Activated CD4-positive, alpha-beta memory T cell treated with anti-CD3 and anti-CD28 coated beads for 36 hours (primary cell): ENCODE measurements at regions of chr7 and their contacts with region 1.

Region 1: DNA sequence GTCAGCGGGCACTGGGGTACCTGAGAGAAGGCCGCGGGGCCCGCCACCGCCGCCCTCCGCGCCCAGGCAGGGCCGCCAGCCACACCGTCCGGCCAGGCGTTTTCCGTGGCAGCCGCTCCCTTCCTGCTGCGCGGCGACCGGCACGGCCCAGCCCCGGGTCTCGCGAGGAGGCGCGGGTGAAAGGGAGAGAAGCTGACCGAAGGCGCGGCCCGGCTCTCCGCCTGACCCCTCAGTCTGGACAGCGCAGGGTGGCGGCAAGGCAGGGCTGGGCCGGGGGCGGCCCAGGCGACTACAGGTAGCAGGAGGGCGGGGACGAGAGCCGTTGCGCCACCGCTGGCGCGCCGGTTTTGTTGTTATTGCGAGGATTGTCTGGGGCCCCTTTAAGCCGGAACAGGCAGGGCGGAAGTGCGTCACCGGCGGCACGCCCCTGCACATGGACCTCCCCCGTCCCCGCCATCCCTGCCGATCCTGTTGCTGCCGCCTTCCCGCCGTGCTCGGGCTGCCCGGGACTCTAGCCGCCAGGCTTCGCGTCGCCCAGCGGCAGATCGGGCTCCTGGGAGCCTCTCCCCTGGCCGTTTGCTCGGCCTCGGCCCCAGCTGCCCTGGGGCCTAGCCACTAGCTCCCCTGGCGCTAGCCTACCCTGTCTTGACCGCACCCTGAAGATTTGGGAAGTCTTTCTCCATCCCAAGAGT is at the start of gene HERPUD2:
- DNase-seq: peak; percentile 95
- H3K4me3 Mint-ChIP-seq: peak within 1 kb of the TSS; percentile 93
- H3K27ac Mint-ChIP-seq: peak within 1 kb of the TSS; percentile 98
- H3K4me1 Mint-ChIP-seq: peaks cover 45% of the 10 kb centered on the region
- H3K27me3 Mint-ChIP-seq: no peaks in the 10 kb centered on the region
- total RNA-seq, gene HERPUD2: 26.2 to 29.6 TPM

Region 2: GRCh38 chr7:34991938-34992840 is 702.7 kb before region 1 on chr7:
- CTCF ChIA-PET with region 1: no interaction called
- POLR2A ChIA-PET with region 1: no interaction called
- intact Hi-C with region 1: loop called (anchors 5 kb)
- DNase-seq: peak; percentile 81
- H3K4me3 Mint-ChIP-seq: peak overlapping the region; percentile 23
- H3K27ac Mint-ChIP-seq: peak overlapping the region; percentile 83
- H3K4me1 Mint-ChIP-seq: peaks cover 29% of the 10 kb centered on the region
- H3K27me3 Mint-ChIP-seq: no peaks in the 10 kb centered on the region

Region 3: DNA sequence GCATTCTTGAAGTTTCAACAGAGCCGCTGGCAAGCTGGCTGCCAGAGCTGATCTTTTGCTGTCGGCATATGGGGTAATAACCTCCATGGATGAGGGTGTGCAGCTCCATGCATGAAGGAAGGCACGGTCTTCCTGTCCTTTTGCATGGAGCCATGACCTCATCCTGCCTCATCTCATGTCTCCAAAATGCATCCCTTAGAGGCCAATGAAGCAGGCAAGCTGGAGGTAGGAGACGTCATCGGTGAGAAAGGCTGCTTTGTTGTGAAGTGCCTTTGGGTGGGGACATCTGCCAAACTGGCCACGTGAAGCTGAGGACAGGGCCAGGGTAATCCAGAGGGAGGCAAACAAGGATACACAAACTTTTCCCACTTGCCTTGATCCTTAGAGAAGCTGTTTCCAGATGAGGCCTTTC is 279.5 kb before region 1 on chr7:
- CTCF ChIA-PET with region 1: no interaction called
- POLR2A ChIA-PET with region 1: no interaction called
- intact Hi-C with region 1: no loop called
- DNase-seq: no peak
- H3K4me3 Mint-ChIP-seq: no peak overlapping the region
- H3K27ac Mint-ChIP-seq: no peak overlapping the region
- H3K4me1 Mint-ChIP-seq: no peaks in the 10 kb centered on the region
- H3K27me3 Mint-ChIP-seq: peaks cover 10% of the 10 kb centered on the region

Region 4: DNA sequence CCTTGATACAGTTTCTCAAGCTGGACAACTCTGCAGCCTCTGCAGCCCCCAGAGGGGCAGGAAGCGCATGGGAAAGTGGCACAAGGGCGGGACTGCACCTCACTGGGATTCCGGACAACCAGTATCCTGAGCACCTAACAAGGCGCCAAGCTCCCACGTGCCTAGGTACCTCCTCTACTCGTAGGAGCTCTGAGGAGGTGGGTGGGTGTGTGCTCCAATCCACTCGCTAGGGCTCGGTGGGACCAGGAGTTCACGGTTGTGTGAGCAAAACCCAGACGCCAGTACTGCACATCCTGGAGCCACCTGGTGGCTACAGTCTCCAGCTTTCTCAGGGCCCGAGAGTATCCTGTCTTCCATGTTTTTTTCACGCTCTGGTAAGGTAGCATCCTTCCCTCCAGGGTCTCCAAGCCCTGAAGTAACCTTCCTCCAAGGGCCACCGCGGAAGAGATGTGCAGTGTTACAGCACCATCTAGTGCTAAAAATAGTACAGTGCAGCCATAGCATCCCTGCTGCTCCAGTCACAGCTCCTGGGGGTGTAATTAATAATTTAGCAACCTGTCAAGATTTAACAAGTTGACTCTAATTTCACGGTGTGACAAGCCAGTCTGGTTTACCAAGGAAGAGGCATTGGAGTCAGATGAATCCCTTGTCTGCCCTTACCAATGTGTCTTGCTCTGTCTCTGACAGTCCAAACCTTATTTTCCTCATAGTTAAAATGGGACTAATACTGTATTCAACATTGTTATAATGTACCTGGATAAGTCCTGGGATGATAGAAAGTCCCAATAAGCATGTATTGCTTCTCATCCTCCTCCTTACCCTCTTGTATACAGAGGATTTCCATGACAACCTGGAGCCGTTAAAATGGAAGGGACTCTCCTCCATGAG is 70.4 kb before region 1 on chr7:
- CTCF ChIA-PET with region 1: no interaction called
- POLR2A ChIA-PET with region 1: no interaction called
- intact Hi-C with region 1: no loop called
- DNase-seq: peak; percentile 48
- H3K4me3 Mint-ChIP-seq: no peak overlapping the region
- H3K27ac Mint-ChIP-seq: no peak overlapping the region
- H3K4me1 Mint-ChIP-seq: peaks cover 2% of the 10 kb centered on the region
- H3K27me3 Mint-ChIP-seq: no peaks in the 10 kb centered on the region

Region 5: DNA sequence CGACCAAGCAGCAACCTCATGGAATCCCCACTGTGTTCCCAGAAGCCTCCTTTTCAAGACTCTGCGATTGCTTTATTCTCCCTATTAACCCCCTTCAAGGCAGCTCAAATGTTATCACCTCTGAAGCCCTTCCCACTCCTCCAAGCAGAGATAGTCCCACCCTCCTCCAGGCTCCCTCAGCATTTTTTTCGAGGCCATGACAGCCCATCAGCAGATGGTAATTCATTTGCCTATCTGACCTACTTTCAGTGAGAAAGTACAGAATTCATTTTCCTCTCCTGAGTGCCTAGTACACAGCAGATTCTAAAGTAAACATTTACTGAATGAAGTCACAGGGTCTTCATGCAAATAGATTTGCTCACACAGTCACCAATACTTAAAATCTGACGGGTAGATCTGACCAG is 47.8 kb before region 1 on chr7:
- CTCF ChIA-PET with region 1: no interaction called
- POLR2A ChIA-PET with region 1: interaction called, 3 read pairs
- intact Hi-C with region 1: loop called (anchors 1 kb)
- DNase-seq: no peak
- H3K4me3 Mint-ChIP-seq: no peak overlapping the region
- H3K27ac Mint-ChIP-seq: peak overlapping the region; percentile 10
- H3K4me1 Mint-ChIP-seq: peaks cover 58% of the 10 kb centered on the region
- H3K27me3 Mint-ChIP-seq: no peaks in the 10 kb centered on the region

Region 6: GRCh38 chr7:35681231-35682029 is 13.5 kb before region 1 on chr7:
- CTCF ChIA-PET with region 1: no interaction called
- POLR2A ChIA-PET with region 1: interaction called, 3 read pairs
- intact Hi-C with region 1: loop called (anchors 1 kb)
- DNase-seq: no peak
- H3K4me3 Mint-ChIP-seq: peak overlapping the region; percentile 16
- H3K27ac Mint-ChIP-seq: peak overlapping the region; percentile 70
- H3K4me1 Mint-ChIP-seq: peaks cover 69% of the 10 kb centered on the region
- H3K27me3 Mint-ChIP-seq: no peaks in the 10 kb centered on the region

Region 7: DNA sequence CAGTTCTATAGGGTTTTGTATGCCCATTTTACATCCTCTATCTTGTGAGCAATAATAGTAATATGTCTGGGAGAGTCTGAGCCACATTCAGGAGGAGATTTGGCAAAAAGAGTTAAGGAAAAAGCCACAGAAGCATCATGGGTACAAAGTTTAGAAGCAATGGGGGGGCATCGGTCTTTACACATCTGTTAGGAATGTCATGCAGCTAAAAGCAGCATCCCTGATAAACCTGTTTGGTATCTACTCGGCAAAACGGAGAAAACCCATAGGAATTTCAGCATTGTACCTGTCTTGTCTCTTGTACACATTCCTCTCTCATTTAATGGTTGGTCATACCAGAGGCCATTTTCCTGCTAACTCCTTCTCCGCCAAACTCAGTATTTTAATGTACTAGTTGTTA is 12.5 kb after region 1 on chr7:
- CTCF ChIA-PET with region 1: interaction called, 13 read pairs
- POLR2A ChIA-PET with region 1: interaction called, 3 read pairs
- intact Hi-C with region 1: loop called (anchors 1 kb)
- DNase-seq: no peak
- H3K4me3 Mint-ChIP-seq: no peak overlapping the region
- H3K27ac Mint-ChIP-seq: no peak overlapping the region
- H3K4me1 Mint-ChIP-seq: peaks cover 8% of the 10 kb centered on the region
- H3K27me3 Mint-ChIP-seq: no peaks in the 10 kb centered on the region

Region 8: DNA sequence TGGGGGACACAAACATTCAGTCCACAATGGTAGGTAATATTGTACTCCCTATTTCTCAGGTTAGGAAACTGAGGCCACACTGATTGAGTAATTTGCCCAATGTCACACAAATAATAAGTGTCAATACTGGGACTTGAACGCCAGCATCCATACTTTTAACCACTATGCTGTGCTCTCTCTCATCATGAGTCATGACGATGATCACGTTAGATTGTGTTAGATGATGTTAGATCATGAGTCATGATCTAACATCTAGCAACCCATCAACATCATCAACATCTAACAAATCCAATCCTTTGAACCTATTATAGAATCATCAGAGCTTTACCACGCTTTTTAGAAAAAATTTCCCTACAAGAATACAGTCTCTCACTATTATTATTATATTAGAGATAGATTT is 28.1 kb after region 1 on chr7:
- CTCF ChIA-PET with region 1: interaction called, 7 read pairs
- POLR2A ChIA-PET with region 1: interaction called, 12 read pairs
- intact Hi-C with region 1: loop called (anchors 1 kb)
- DNase-seq: no peak
- H3K4me3 Mint-ChIP-seq: peak overlapping the region; percentile 29
- H3K27ac Mint-ChIP-seq: peak overlapping the region; percentile 91
- H3K4me1 Mint-ChIP-seq: peaks cover 62% of the 10 kb centered on the region
- H3K27me3 Mint-ChIP-seq: no peaks in the 10 kb centered on the region

Region 9: GRCh38 chr7:35729061-35729783 is 34.3 kb after region 1 on chr7:
- CTCF ChIA-PET with region 1: interaction called, 7 read pairs
- POLR2A ChIA-PET with region 1: interaction called, 12 read pairs
- intact Hi-C with region 1: no loop called
- DNase-seq: peak; percentile 68
- H3K4me3 Mint-ChIP-seq: no peak overlapping the region
- H3K27ac Mint-ChIP-seq: peak overlapping the region; percentile 15
- H3K4me1 Mint-ChIP-seq: peaks cover 61% of the 10 kb centered on the region
- H3K27me3 Mint-ChIP-seq: peaks cover 3% of the 10 kb centered on the region

Region 10: DNA sequence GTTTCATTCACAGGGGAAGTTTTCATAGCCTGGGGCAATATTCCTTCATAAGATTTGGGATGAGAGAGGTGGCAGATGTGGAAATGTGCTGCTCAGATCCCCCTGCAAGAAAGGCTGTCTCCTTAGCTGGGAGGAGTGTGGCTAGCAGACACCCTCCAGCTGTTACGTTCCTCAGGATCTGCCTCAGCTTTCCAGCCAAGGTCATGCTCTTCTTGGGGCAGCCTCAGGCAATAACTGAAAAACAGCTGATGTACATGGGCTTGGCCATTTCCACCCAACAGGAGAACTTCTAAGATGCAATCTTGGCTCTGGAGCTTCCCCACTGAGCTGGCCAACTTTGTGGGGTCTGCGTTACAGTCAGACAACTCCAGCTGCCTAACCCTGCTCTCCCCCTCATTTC is 54.6 kb after region 1 on chr7:
- CTCF ChIA-PET with region 1: no interaction called
- POLR2A ChIA-PET with region 1: no interaction called
- intact Hi-C with region 1: no loop called
- DNase-seq: no peak
- H3K4me3 Mint-ChIP-seq: no peak overlapping the region
- H3K27ac Mint-ChIP-seq: no peak overlapping the region
- H3K4me1 Mint-ChIP-seq: no peaks in the 10 kb centered on the region
- H3K27me3 Mint-ChIP-seq: peaks cover 3% of the 10 kb centered on the region